ENCODE measurements at regions of chr10 and their contacts with region 1.

Region 1: DNA sequence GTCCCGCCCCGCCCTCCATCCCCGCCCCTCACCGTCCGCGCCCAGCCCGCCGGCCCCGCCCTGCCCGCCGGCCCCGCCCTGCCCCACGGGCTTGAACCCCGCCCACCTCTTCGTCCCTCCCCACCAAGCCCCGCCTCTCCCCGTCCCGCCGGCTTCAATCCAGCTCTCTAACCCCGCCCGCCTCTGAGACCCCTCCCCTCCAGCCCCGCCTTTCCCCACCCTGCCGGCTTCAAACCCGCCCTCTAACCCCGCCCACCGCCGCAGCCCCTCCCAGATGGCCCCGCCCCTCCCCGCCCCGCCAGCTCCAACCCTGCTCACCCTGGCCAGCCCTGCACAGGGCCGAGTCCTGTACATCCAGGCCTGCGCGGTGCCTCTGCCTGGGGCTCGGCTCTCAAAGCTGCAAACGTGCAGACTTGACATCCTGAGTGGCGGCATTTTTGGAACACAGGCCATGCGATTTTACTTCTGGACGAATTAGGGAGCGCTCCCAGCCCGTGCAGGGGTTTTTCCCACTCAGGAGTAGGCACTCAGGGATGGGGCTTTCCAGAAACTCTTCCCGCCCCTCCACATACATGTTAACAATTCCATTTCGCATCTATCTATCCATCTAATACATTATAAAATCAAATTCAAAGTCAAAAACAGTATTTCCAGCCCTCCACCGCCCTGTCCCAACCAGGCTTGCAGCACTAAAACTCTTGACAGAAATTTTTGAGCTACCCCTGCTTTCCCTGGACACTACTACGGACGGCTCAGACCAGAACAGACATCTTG is 475 bp upstream of the NMT2 start:
- DNase-seq: peak; percentile 79
- ATAC-seq: peak; percentile 89
- H3K4me3 Mint-ChIP-seq: peak overlapping the region; percentile 58
- H3K27ac Mint-ChIP-seq: no peak overlapping the region
- H3K4me1 Mint-ChIP-seq: peaks cover 26% of the 10 kb centered on the region
- H3K27me3 Mint-ChIP-seq: no peaks in the 10 kb centered on the region
- CTCF ChIP-seq: no peak

Region 2: DNA sequence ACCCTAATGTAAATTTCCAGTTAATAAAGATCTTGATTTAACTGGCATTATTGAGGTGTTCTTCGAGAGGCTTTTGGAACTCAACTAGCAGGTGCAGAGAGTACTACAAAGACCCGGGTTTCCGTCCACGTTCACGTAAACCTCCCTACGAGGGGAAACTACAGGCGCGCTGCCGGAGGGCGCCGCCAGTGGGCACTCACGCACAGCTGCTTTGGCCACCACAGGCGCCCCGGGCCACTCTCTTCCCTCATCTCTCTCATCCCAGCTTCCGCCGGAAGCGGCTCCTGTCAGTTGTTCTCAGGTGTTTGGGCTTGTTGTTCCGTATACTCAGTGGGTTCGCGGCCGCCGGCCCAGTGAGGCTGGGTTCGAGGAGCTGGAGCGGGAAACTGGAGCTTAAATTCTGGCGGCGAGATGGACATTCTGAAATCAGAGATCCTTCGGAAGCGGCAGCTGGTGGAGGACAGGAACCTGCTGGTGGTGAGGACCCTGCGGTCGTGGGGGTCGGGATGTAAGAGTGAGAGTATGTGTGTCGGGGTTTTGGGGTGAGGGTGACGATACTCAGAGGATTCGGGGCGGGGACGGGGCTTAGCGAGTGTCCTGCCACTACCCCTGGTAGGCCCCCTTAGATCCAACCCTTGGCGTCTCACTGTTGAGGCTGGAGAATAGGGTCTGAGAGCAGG is 1582.2 kb before region 1 on chr10 and contains the start of gene PRPF18:
- CTCF ChIA-PET with region 1: no interaction called
- POLR2A ChIA-PET with region 1: no interaction called
- intact Hi-C with region 1: loop called (anchors 5 kb)
- DNase-seq: peak; percentile 93
- ATAC-seq: peak; percentile 100
- H3K4me3 Mint-ChIP-seq: peak within 1 kb of the TSS; percentile 100
- H3K27ac Mint-ChIP-seq: peak within 1 kb of the TSS; percentile 98
- H3K4me1 Mint-ChIP-seq: peaks cover 29% of the 10 kb centered on the region
- H3K27me3 Mint-ChIP-seq: peaks cover 19% of the 10 kb centered on the region
- CTCF ChIP-seq: peak; percentile 80
- total RNA-seq, gene PRPF18: 20.7 and 26.1 TPM in 2 replicates

Region 3: DNA sequence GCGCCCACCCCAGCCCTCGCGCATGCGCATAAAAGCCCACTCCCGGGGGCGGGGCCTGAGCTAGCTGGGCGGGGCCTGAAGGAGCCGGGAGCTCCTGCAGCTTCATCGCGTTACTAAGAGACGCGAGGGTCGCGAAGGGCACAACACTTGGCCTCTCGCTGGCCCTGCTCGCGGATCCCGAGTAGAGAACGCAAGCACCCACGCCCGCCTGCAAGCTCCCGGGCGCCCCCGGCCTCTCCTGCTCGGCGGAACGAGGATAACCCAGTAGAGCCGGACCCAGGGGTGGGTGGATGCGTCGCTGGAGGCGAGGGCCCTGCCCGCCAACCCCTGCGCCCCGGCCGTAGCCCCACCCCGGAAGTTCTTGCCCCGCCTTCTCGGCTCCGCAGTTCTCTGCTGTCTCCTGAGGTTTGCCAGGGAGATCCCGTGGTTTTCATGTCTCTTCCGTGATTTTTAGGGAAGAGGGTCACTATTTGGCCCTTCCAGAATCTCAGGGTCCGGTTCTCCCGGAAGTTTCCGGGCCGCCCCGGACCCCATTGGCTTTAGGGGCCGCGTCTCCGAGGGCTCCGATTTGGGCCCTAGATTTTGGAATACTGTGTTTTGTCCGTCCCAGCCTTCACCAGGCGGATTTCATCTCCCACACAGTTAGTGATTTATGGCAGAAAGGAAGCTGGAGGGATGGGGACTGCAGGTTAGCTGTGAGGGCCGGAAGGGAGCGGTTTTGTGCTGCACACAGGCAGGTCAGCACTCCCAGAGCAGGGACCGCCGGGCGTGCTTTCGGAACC is 209.5 kb before region 1 on chr10 and contains the start of gene MEIG1:
- CTCF ChIA-PET with region 1: no interaction called
- POLR2A ChIA-PET with region 1: interaction called, 4 read pairs
- intact Hi-C with region 1: loop called (anchors 1 kb)
- DNase-seq: peak; percentile 100
- ATAC-seq: peak; percentile 83
- H3K4me3 Mint-ChIP-seq: peak within 1 kb of the TSS; percentile 97
- H3K27ac Mint-ChIP-seq: peak within 1 kb of the TSS; percentile 98
- H3K4me1 Mint-ChIP-seq: peaks cover 14% of the 10 kb centered on the region
- H3K27me3 Mint-ChIP-seq: no peaks in the 10 kb centered on the region
- CTCF ChIP-seq: no peak
- total RNA-seq, gene MEIG1: 0.49 and 0.54 TPM in 2 replicates

Region 4: GRCh38 chr10:15106352-15107013 is 62.5 kb before region 1 on chr10:
- CTCF ChIA-PET with region 1: interaction called, 4 read pairs
- POLR2A ChIA-PET with region 1: interaction called, 3 read pairs
- intact Hi-C with region 1: loop called (anchors 1 kb)
- DNase-seq: peak; percentile 32
- ATAC-seq: peak; percentile 96
- H3K4me3 Mint-ChIP-seq: no peak overlapping the region
- H3K27ac Mint-ChIP-seq: no peak overlapping the region
- H3K4me1 Mint-ChIP-seq: peaks cover 8% of the 10 kb centered on the region
- H3K27me3 Mint-ChIP-seq: no peaks in the 10 kb centered on the region
- CTCF ChIP-seq: peak; percentile 51

Region 5: DNA sequence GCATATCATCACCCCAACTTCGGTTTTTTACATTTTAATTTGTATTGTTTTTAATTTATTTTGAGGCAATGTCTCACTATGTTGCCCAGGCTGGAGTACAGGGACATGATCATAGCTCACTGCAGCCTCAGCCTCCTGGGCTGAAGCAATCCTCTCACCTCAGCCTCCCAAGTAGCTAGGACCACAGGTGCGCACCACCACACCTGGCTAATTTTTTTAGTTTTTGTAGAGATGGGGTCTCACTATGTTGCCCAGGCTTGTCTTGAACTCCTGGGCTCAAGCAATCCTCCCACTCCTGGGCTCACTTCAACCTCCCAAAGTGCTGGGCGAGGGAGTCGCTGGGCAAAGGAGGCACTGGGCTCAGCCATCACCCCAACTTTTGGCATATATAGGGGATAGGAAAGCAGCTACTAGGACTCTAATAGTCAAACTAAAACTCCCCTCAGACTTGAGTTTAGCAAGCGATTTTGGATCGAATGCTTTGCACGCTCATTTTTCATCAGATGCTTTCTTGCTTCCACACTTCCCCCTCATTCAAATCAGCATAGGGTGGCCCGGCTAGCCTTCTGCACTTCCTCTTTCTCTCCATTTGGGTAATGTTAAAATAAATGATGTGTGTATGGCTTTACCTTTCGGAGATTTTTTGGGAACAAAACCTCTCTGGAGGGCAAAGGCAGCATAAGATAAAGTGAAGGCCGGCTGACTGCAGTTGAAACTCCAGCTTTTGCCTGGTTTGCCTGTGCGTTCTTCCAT is 20.3 kb after region 1 on chr10:
- CTCF ChIA-PET with region 1: interaction called, 3 read pairs
- POLR2A ChIA-PET with region 1: interaction called, 10 read pairs
- intact Hi-C with region 1: loop called (anchors 2 kb)
- DNase-seq: no peak
- ATAC-seq: peak; percentile 81
- H3K4me3 Mint-ChIP-seq: peak overlapping the region; percentile 29
- H3K27ac Mint-ChIP-seq: peak overlapping the region; percentile 9
- H3K4me1 Mint-ChIP-seq: peaks cover 16% of the 10 kb centered on the region
- H3K27me3 Mint-ChIP-seq: no peaks in the 10 kb centered on the region
- CTCF ChIP-seq: no peak

Region 6: GRCh38 chr10:16436758-16437539 is 1268.0 kb after region 1 on chr10 and contains the start of gene PTER:
- CTCF ChIA-PET with region 1: no interaction called
- POLR2A ChIA-PET with region 1: no interaction called
- intact Hi-C with region 1: loop called (anchors 2 kb)
- DNase-seq: peak; percentile 97
- ATAC-seq: peak; percentile 99
- H3K4me3 Mint-ChIP-seq: peak within 1 kb of the TSS; percentile 95
- H3K27ac Mint-ChIP-seq: peak within 1 kb of the TSS; percentile 88
- H3K4me1 Mint-ChIP-seq: peaks cover 48% of the 10 kb centered on the region
- H3K27me3 Mint-ChIP-seq: peaks cover 3% of the 10 kb centered on the region
- CTCF ChIP-seq: no peak
- total RNA-seq, gene PTER: 14.9 and 15.0 TPM in 2 replicates

Measured in activated B cell treated with CpG ODN at 0.5 μM for 24 hours (primary cell).